ENCODE measurements at regions of chr1 and their contacts with region 1.

Region 1: DNA sequence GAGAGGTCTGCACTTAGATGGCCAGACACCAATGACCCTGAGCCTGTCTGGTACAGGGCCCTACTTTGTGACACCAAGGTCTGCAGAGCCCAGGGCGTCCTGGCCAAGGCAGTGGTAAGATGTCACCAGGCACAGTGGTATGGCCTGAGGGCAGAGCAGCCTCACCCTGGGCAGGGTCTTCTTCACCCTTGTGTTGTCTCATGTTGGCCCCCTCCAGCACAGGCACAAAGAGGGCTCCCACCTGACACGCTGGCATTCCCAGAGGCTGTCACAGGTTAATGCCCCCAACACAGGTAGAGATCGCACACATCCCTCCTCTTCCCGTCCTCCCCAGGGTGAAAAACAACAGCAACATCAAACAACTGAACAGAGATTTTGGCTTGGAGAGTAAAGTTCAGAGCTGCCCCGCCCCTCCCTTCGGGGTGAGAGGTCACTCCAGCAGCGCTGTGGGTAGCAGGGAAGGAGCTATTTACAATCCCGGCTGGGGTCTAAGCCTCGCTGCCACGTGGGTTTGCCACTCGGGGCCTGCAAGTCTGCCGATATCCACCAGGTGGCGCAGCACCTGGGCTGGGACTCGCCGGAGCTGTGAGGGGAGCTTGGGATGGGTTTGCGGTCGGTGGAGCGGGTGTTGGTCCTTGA is 12.6 kb downstream of the EFNA3 start:
- DNase-seq: peak; percentile 70
- H3K4me3 Mint-ChIP-seq: no peak overlapping the region
- H3K27ac Mint-ChIP-seq: no peak overlapping the region
- H3K4me1 Mint-ChIP-seq: peaks cover 5% of the 10 kb centered on the region
- H3K27me3 Mint-ChIP-seq: peaks cover 20% of the 10 kb centered on the region

Region 2: GRCh38 chr1:155050560-155051341 is 40.4 kb before region 1 on chr1 and contains the start of gene ADAM15:
- intact Hi-C with region 1: no loop called
- DNase-seq: peak; percentile 75
- H3K4me3 Mint-ChIP-seq: peak within 1 kb of the TSS; percentile 84
- H3K27ac Mint-ChIP-seq: peak within 1 kb of the TSS; percentile 79
- H3K4me1 Mint-ChIP-seq: peaks cover 24% of the 10 kb centered on the region
- H3K27me3 Mint-ChIP-seq: no peaks in the 10 kb centered on the region
- total RNA-seq, gene ADAM15: 72.0 and 74.8 TPM in 2 replicates

Region 3: GRCh38 chr1:155167166-155168104 is 76.2 kb after region 1 on chr1:
- intact Hi-C with region 1: loop called (anchors 1 kb)
- DNase-seq: peak; percentile 77
- H3K4me3 Mint-ChIP-seq: peak overlapping the region; percentile 21
- H3K27ac Mint-ChIP-seq: no peak overlapping the region
- H3K4me1 Mint-ChIP-seq: peaks cover 20% of the 10 kb centered on the region
- H3K27me3 Mint-ChIP-seq: no peaks in the 10 kb centered on the region

Region 4: GRCh38 chr1:155185351-155186066 is 94.3 kb after region 1 on chr1:
- intact Hi-C with region 1: no loop called
- DNase-seq: no peak
- H3K4me3 Mint-ChIP-seq: no peak overlapping the region
- H3K27ac Mint-ChIP-seq: peak overlapping the region; percentile 14
- H3K4me1 Mint-ChIP-seq: peaks cover 4% of the 10 kb centered on the region
- H3K27me3 Mint-ChIP-seq: no peaks in the 10 kb centered on the region